Prostate gland (tissue), 2 donors: ENCODE measurements at regions of chr15 and their contacts with region 1.

Region 1: GRCh38 chr15:25670025-25670554 is 193.0 kb downstream of the ATP10A start:
- DNase-seq: peak; percentile 17
- H3K4me3 ChIP-seq: no peak overlapping the region
- H3K27ac ChIP-seq: peak overlapping the region in 1 of 2 donors; percentile 35
- H3K4me1 ChIP-seq: no peaks in the 10 kb centered on the region
- H3K27me3 ChIP-seq: no peaks in the 10 kb centered on the region
- CTCF ChIP-seq: no peak
- POLR2A ChIP-seq: no peak

Region 2: GRCh38 chr15:25527118-25527517 is 143.0 kb before region 1 on chr15:
- intact Hi-C with region 1: no loop called
- DNase-seq: no peak
- H3K4me3 ChIP-seq: no peak overlapping the region
- H3K27ac ChIP-seq: no peak overlapping the region
- H3K4me1 ChIP-seq: no peaks in the 10 kb centered on the region
- H3K27me3 ChIP-seq: no peaks in the 10 kb centered on the region
- CTCF ChIP-seq: no peak
- POLR2A ChIP-seq: no peak

Region 3: GRCh38 chr15:25830844-25831451 is 160.9 kb after region 1 on chr15:
- intact Hi-C with region 1: loop called (anchors 10 kb)
- DNase-seq: no peak
- H3K4me3 ChIP-seq: no peak overlapping the region
- H3K27ac ChIP-seq: peak overlapping the region; percentile 26 to 33
- H3K4me1 ChIP-seq: no peaks in the 10 kb centered on the region
- H3K27me3 ChIP-seq: no peaks in the 10 kb centered on the region
- CTCF ChIP-seq: no peak
- POLR2A ChIP-seq: no peak